Naive thymus-derived CD4-positive, alpha-beta T cell (primary cell): ENCODE measurements at regions of chr5 and their contacts with region 1.

Region 1: DNA sequence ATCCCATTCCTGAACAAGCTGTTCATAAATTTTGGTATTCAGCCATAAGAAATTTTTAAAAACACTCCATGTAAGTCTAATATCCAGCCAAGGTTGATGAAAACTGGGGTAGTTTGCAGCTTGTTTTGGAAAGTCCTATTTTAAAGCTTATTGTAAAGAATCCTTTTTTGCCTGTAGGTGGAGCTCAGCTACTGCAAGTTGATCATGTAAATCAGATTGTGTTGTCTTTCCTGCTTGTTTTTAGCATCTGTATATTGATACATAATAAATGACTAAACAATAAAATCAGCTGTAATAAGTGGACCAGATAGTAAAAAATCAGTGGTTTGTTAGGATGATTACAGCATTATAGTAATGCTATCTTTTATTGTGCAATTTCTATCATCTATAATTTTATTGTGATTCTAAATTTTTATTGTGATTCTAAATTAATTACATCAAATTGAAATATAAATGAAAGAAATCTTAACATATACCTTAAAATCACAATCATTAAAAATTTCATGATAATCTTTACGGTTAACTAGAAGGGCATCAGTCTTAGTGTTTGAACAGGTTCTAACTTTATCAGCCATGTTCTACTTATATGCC is 42.4 kb downstream of the CWC27 start:
- DNase-seq: peak in 7 of 9 donors; percentile 1 to 38 (median 21)
- ATAC-seq: peak; percentile 50
- H3K4me3 ChIP-seq: no peak overlapping the region
- H3K4me3 Mint-ChIP-seq: no peak overlapping the region
- H3K27ac ChIP-seq: no peak overlapping the region
- H3K27ac Mint-ChIP-seq: peak overlapping the region in 1 of 9 donors; percentile 33
- H3K4me1 ChIP-seq: no peaks in the 10 kb centered on the region
- H3K4me1 Mint-ChIP-seq: peaks cover 0 to 3% (median 0%) of the 10 kb centered on the region in 7 donors
- H3K27me3 ChIP-seq: no peaks in the 10 kb centered on the region
- H3K27me3 Mint-ChIP-seq: no peaks in the 10 kb centered on the region

Region 2: GRCh38 chr5:64759960-64760660 is 51.0 kb before region 1 on chr5:
- CTCF ChIA-PET with region 1: no interaction called
- POLR2A ChIA-PET with region 1: no interaction called
- intact Hi-C with region 1: loop called in 1 of 2 experiments (anchors 10 kb)
- DNase-seq: no peak
- ATAC-seq: no peak
- H3K4me3 ChIP-seq: no peak overlapping the region
- H3K4me3 Mint-ChIP-seq: no peak overlapping the region
- H3K27ac ChIP-seq: no peak overlapping the region
- H3K27ac Mint-ChIP-seq: no peak overlapping the region
- H3K4me1 ChIP-seq: no peaks in the 10 kb centered on the region
- H3K4me1 Mint-ChIP-seq: peaks cover 12 to 43% (median 29%) of the 10 kb centered on the region in 7 donors
- H3K27me3 ChIP-seq: no peaks in the 10 kb centered on the region
- H3K27me3 Mint-ChIP-seq: no peaks in the 10 kb centered on the region

Region 3: GRCh38 chr5:65021527-65022226 is 210.5 kb after region 1 on chr5:
- CTCF ChIA-PET with region 1: no interaction called
- POLR2A ChIA-PET with region 1: no interaction called
- intact Hi-C with region 1: no loop called
- DNase-seq: no peak
- ATAC-seq: peak; percentile 60
- H3K4me3 ChIP-seq: no peak overlapping the region
- H3K4me3 Mint-ChIP-seq: no peak overlapping the region
- H3K27ac ChIP-seq: no peak overlapping the region
- H3K27ac Mint-ChIP-seq: peak overlapping the region in 1 of 9 donors; percentile 10
- H3K4me1 ChIP-seq: no peaks in the 10 kb centered on the region
- H3K4me1 Mint-ChIP-seq: peaks cover 5 to 41% (median 24%) of the 10 kb centered on the region in 7 donors
- H3K27me3 ChIP-seq: no peaks in the 10 kb centered on the region
- H3K27me3 Mint-ChIP-seq: no peaks in the 10 kb centered on the region

Region 4: GRCh38 chr5:65076251-65076869 is 265.2 kb after region 1 on chr5:
- CTCF ChIA-PET with region 1: no interaction called
- POLR2A ChIA-PET with region 1: no interaction called
- intact Hi-C with region 1: loop called in 1 of 2 experiments (anchors 2 kb)
- DNase-seq: peak in 8 of 9 donors; percentile 26 to 66 (median 46)
- ATAC-seq: peak; percentile 89
- H3K4me3 ChIP-seq: no peak overlapping the region
- H3K4me3 Mint-ChIP-seq: no peak overlapping the region
- H3K27ac ChIP-seq: no peak overlapping the region
- H3K27ac Mint-ChIP-seq: peak overlapping the region in 5 of 9 donors; percentile 2 to 78 (median 39)
- H3K4me1 ChIP-seq: no peaks in the 10 kb centered on the region
- H3K4me1 Mint-ChIP-seq: peaks cover 2 to 23% (median 17%) of the 10 kb centered on the region in 7 donors
- H3K27me3 ChIP-seq: no peaks in the 10 kb centered on the region
- H3K27me3 Mint-ChIP-seq: peaks cover 0 to 17% (median 0%) of the 10 kb centered on the region in 5 donors

Region 5: DNA sequence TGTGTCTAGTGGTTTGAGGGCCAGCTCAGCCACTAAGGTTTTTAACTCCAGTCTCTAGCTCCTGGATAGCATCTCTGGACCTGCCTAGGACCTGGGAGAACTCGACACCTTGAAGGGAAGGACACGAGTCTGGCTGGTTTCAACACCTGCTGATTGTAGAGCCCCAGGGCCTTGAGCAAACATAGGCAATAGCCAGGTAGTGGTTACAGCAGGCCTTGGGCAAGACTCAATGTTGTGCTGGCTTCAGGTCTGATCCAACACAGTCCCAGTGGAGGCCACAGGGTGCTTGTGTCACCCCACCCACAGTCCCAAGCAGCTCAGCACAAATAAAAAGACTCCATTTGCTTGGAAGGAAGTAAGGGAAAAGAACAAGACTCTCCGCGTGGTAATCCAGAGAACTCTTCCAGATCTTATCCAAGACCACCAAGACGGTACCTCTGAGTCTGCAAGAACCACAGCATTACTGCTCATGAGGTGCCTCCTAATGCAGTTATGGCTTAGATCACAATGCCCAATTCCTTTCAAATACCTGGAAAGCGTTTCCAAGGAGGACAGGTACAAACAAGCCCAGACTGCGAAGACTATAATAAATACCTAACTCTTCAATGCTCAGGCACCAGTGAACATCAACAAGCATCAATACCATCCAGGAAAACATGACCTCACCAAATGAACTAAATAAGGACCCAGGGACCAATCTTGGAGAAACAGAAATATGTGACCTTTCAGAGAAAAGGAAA is 283.0 kb after region 1 on chr5:
- CTCF ChIA-PET with region 1: no interaction called
- POLR2A ChIA-PET with region 1: no interaction called
- intact Hi-C with region 1: no loop called
- DNase-seq: no peak
- ATAC-seq: no peak
- H3K4me3 ChIP-seq: no peak overlapping the region
- H3K4me3 Mint-ChIP-seq: no peak overlapping the region
- H3K27ac ChIP-seq: no peak overlapping the region
- H3K27ac Mint-ChIP-seq: peak overlapping the region in 1 of 9 donors; percentile 25
- H3K4me1 ChIP-seq: no peaks in the 10 kb centered on the region
- H3K4me1 Mint-ChIP-seq: no peaks in the 10 kb centered on the region
- H3K27me3 ChIP-seq: no peaks in the 10 kb centered on the region
- H3K27me3 Mint-ChIP-seq: peaks cover 5 to 21% (median 11%) of the 10 kb centered on the region in 5 donors

Region 6: DNA sequence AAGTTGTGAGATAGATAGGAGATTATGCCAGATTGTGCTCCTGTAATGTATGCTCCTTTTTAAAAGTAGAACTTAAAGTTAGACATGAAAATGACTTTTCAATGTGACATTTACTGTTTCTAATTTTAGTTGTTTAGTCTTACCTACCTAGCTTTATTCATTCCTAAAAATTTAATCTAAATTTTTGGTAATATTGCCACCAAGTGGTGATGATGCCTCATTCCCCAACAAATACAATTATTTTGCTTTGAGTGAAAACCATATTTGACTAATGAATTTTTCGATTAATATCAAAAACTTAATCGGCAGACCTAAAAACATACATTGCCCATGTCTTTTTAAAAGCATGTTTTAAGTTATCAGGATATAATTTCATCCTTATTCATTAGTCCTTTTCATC is 777.5 kb after region 1 on chr5:
- CTCF ChIA-PET with region 1: no interaction called
- POLR2A ChIA-PET with region 1: no interaction called
- intact Hi-C with region 1: loop called in 1 of 2 experiments (anchors 1 kb)
- DNase-seq: peak in 1 of 9 donors; percentile 5
- ATAC-seq: no peak
- H3K4me3 ChIP-seq: no peak overlapping the region
- H3K4me3 Mint-ChIP-seq: no peak overlapping the region
- H3K27ac ChIP-seq: no peak overlapping the region
- H3K27ac Mint-ChIP-seq: no peak overlapping the region
- H3K4me1 ChIP-seq: no peaks in the 10 kb centered on the region
- H3K4me1 Mint-ChIP-seq: peaks cover 0 to 6% (median 0%) of the 10 kb centered on the region in 7 donors
- H3K27me3 ChIP-seq: no peaks in the 10 kb centered on the region
- H3K27me3 Mint-ChIP-seq: no peaks in the 10 kb centered on the region